Activated CD4-positive, alpha-beta T cell treated with anti-CD3 and anti-CD28 coated beads, Interleukin-2, amount 10 ng/mL, durations not matched to agents 24 days and 14 days (primary cell): ENCODE measurements at regions of chr9 and their contacts with region 1.

Region 1: GRCh38 chr9:77725820-77726219 is 77.7 kb upstream of the GNA14 start:
- DNase-seq: peak; percentile 73
- H3K4me3 Mint-ChIP-seq: peak overlapping the region; percentile 13
- H3K27ac Mint-ChIP-seq: peak overlapping the region; percentile 87
- H3K4me1 Mint-ChIP-seq: peaks cover 27% of the 10 kb centered on the region
- H3K27me3 Mint-ChIP-seq: no peaks in the 10 kb centered on the region

Region 2: GRCh38 chr9:77744841-77745430 is 19.1 kb after region 1 on chr9:
- intact Hi-C with region 1: loop called (anchors 2 kb)
- DNase-seq: no peak
- H3K4me3 Mint-ChIP-seq: peak overlapping the region; percentile 39
- H3K27ac Mint-ChIP-seq: peak overlapping the region; percentile 68
- H3K4me1 Mint-ChIP-seq: peaks cover 29% of the 10 kb centered on the region
- H3K27me3 Mint-ChIP-seq: no peaks in the 10 kb centered on the region

Region 3: GRCh38 chr9:77820293-77820954 is 94.6 kb after region 1 on chr9:
- intact Hi-C with region 1: loop called (anchors 5 kb)
- DNase-seq: no peak
- H3K4me3 Mint-ChIP-seq: no peak overlapping the region
- H3K27ac Mint-ChIP-seq: peak overlapping the region; percentile 64
- H3K4me1 Mint-ChIP-seq: peaks cover 19% of the 10 kb centered on the region
- H3K27me3 Mint-ChIP-seq: no peaks in the 10 kb centered on the region

Region 4: GRCh38 chr9:77977210-77977611 is 251.4 kb after region 1 on chr9:
- intact Hi-C with region 1: loop called (anchors 5 kb)
- DNase-seq: peak; percentile 84
- H3K4me3 Mint-ChIP-seq: peak overlapping the region; percentile 68
- H3K27ac Mint-ChIP-seq: peak overlapping the region; percentile 91
- H3K4me1 Mint-ChIP-seq: peaks cover 44% of the 10 kb centered on the region
- H3K27me3 Mint-ChIP-seq: no peaks in the 10 kb centered on the region